ENCODE measurements at regions of chr19 and their contacts with region 1.

Region 1: GRCh38 chr19:1026189-1027019 is at the start of gene CNN2:
- DNase-seq: peak; percentile 88
- CTCF ChIP-seq: no peak

Region 2: DNA sequence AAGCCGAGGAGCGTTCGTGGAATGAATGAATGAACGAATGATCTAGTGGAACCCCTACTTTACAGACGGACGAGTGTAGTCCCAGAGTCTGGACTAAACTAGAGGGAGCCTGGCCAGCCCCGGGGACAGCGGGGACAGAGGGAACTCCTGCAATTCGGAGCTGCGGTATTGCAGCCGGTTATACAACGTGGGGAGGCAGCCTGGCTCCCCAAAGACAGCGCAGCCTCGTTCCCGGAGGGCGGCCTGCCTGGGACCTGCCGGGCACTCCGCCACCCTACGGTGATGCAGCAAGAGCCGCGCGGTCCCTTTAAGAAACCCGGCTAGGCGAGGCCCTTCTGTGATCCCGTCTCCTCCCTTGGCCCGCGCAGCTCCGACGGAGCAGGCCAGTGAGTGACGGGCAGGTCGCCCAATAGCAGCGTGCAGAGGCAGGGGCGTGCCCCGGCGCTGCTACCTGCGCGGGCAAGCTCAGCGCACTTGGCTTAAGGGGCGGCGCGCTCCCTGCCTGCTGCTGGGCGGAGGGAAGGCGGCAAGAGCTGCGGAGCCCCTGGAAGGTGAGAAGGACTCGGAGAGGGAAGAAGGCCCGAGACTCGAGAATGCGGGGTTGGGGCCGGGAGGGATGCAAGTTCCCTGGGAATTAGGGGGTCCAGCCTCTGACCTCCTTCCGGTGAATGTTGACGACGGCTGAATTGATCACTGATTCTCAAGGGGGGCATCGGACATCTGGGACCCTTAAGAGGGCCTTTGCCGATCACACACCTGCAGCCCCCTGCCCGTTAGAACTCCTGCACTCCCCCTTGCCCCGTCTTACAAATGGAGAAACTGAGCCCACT is 13.5 kb after region 1 on chr19 and contains the start of gene ABCA7:
- CTCF ChIA-PET with region 1: interaction called, 32 read pairs
- POLR2A ChIA-PET with region 1: interaction called, 8 read pairs
- DNase-seq: peak; percentile 96
- CTCF ChIP-seq: no peak